Common myeloid progenitor, CD34-positive (primary cell): ENCODE measurements at regions of chr10 and their contacts with region 1.

Region 1: DNA sequence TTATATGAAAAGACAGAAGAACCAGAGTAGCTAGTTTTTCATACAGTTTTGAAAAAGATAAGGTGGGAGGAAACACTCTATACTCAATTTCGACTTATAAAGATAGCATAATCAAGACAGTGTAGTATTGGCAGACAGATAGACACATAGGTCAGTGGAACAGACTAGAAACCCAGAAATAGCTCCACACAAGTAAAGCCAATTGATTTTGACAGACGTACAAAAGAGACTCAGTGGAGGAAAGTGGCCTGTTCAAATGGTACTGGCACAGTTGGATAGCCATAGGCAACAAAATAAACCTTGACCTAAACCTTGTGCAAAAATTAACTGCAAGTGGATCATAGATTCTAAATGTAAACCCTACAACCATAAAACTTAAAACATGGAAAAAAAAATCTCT is 46.8 kb downstream of the MAPK8 start:
- DNase-seq: no peak
- H3K4me3 ChIP-seq: no peak overlapping the region
- H3K27ac ChIP-seq: no peak overlapping the region
- H3K4me1 ChIP-seq: no peaks in the 10 kb centered on the region
- H3K27me3 ChIP-seq: no peaks in the 10 kb centered on the region

Region 2: GRCh38 chr10:48363617-48364355 is 10.5 kb after region 1 on chr10:
- CTCF ChIA-PET with region 1: interaction called, 11 read pairs
- POLR2A ChIA-PET with region 1: no interaction called
- DNase-seq: peak; percentile 81 to 89 (median 88)
- H3K4me3 ChIP-seq: peak overlapping the region in 2 of 7 experiments; percentile 3 to 6
- H3K27ac ChIP-seq: peak overlapping the region in 1 of 2 experiments; percentile 57
- H3K4me1 ChIP-seq: peaks cover 4 to 27% (median 16%) of the 10 kb centered on the region in 4 experiments
- H3K27me3 ChIP-seq: no peaks in the 10 kb centered on the region